Posterior vena cava (tissue), 2 donors: ENCODE measurements at regions of chr17 and their contacts with region 1.

Region 1: DNA sequence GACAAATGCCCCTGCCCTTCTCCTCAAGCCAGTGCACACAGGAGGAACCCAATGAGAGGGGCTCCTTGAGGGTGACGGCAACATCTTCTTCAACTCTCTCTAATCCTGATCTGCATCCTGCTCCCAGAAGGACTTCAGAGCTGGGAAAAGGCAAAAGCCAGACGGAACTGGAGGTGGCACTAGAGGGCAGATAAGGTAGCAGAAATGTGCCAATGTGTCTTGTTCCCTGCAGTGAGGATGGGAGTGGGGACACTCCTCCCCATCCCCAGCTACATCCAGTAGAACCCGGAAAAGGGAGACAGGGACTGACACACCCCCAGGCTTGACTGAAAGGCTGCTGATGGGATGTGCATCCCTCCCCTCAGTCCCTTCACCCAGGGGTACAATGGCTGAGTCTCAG is 28.5 kb downstream of the SRCIN1 start:
- DNase-seq: no peak

Region 2: DNA sequence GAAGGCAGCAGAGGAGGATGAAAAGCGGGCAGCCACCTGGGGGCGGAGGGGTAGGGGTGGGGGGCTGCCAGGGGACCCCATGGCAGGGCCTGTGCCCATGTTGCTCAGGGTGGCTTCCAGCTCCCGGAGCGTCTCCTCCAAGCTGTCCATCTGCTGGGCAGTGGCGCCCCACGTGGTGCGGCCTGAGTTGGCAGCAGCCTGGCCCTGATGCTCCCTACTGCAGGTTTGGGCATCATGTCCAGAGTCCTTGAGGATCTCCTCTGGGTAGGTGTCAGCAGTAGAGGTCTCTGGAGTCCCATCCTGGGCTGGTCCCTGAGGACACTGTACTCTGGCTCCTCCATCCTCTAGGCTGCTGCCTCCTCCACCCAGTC is 32.4 kb before region 1 on chr17:
- intact Hi-C with region 1: loop called in 1 of 2 experiments (anchors 2 kb)
- DNase-seq: no peak

Region 3: DNA sequence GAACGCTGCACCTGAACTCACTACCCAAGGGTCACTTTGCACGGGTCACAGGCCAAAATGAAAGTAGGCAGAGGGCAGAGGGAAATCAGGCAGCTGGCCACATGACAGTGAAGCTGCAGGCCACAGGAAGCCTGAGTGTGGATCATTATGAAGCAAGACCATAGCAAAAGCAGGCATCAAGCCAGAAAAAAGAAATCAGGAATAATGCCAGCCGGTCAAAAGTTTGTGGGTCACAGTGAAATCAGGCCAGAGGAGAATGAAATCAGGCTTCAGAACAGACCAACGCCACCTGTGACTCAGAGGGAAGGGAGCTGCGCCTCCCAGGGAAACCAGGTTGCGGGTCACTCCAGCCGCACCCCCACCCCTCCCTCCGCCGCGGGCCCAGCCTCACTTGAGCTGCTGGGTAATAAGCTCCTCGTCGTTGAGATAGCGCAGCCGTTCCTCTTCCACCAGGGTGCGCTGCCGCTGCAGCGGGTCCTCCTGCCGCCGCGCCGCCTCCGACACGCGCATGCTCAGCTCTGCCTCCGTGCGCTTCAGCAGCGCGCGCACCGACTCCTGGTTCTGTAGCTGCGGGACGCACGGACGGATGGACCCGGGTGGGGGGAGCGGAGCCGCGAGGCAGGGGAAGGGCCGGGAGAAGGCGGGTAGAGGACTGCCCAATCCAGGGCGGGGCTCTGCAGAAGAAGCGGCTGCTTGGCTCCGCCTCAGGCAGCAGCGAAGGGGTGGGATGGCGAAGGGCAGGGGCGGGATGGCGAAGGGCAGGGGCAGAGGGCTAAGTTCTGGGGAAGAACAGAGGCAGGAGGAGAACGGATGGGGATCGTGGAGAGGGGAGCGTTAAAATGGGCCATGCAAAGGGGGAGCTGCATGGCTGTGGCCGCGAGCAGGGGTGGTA is 19.2 kb before region 1 on chr17:
- intact Hi-C with region 1: no loop called
- DNase-seq: peak; percentile 98

Region 4: GRCh38 chr17:38636054-38636453 is 58.8 kb after region 1 on chr17:
- intact Hi-C with region 1: no loop called
- DNase-seq: no peak

Region 5: GRCh38 chr17:39281806-39282205 is 704.6 kb after region 1 on chr17:
- intact Hi-C with region 1: no loop called
- DNase-seq: no peak